K562 (cell line): ENCODE measurements at regions of chr12 and their contacts with region 1.

Region 1: GRCh38 chr12:64273527-64274403 is 51.7 kb upstream of the KICS2 start:
- DNase-seq: peak in 3 of 4 experiments; percentile 11 to 50 (median 40)
- ATAC-seq: peak; percentile 97
- H3K4me3 ChIP-seq: no peak overlapping the region
- H3K27ac ChIP-seq: no peak overlapping the region
- H3K4me1 ChIP-seq: no peaks in the 10 kb centered on the region
- H3K27me3 ChIP-seq: peaks cover 7 to 26% of the 10 kb centered on the region in 2 experiments; a peak in 4 of 5 replicates
- CTCF ChIP-seq: peak; percentile 71 to 84 (median 76)
- EP300 ChIP-seq: no peak
- POLR2A ChIP-seq: no peak
- RAD21 ChIP-seq: peak; percentile 70 to 77

Region 2: DNA sequence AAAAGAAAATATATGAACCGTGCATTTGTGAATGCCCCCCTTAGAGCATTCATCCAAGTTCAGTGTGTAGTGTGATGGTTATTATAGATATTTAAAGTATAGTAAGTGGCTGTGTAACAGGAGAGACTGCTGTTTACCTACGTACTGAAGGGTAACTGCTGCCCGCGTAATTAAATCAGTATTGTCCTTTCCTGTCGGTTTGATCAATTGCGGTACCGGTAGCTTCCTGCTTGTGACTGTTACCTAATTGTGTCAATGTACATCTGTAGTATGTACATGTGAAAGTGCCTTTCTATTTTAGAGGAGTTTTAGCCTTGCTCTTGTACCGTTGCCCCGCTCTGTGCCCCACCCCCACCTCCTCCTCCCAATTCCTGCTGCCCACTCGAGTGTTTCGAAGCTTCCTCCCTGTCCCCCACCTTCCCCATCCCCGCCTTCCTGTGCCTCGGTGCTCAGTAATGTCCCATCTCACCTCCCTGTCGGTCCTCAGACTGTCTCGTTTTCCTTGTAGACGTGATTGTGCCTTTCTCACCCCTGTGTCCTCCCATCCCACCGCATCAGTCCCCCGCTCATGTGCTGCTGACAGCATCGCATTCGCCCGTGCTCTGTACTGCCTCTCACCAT is 126.6 kb before region 1 on chr12:
- CTCF ChIA-PET with region 1: no interaction called
- POLR2A ChIA-PET with region 1: no interaction called
- in situ Hi-C with region 1: no loop called
- intact Hi-C with region 1: no loop called
- DNase-seq: no peak
- ATAC-seq: no peak
- H3K4me3 ChIP-seq: no peak overlapping the region
- H3K27ac ChIP-seq: no peak overlapping the region
- H3K4me1 ChIP-seq: no peaks in the 10 kb centered on the region
- H3K27me3 ChIP-seq: peaks cover 0 to 18% of the 10 kb centered on the region in 2 experiments; a peak in 2 of 5 replicates
- CTCF ChIP-seq: no peak
- EP300 ChIP-seq: no peak
- POLR2A ChIP-seq: no peak
- RAD21 ChIP-seq: no peak

Region 3: GRCh38 chr12:64318605-64319004 is 44.8 kb after region 1 on chr12:
- CTCF ChIA-PET with region 1: no interaction called
- POLR2A ChIA-PET with region 1: no interaction called
- in situ Hi-C with region 1: loop called (anchors 5 kb)
- intact Hi-C with region 1: loop called (anchors 5 kb)
- DNase-seq: peak in 1 of 4 experiments; percentile 7
- ATAC-seq: peak; percentile 53
- H3K4me3 ChIP-seq: no peak overlapping the region
- H3K27ac ChIP-seq: no peak overlapping the region
- H3K4me1 ChIP-seq: peaks cover 0 to 3% of the 10 kb centered on the region in 2 experiments; a peak in 1 of 5 replicates
- H3K27me3 ChIP-seq: peaks cover 0 to 4% of the 10 kb centered on the region in 2 experiments; a peak in 3 of 5 replicates
- CTCF ChIP-seq: no peak
- EP300 ChIP-seq: no peak
- POLR2A ChIP-seq: no peak
- RAD21 ChIP-seq: 0 out of 4 replicates have a peak, but pooled peaks of 1 of the 2 experiments have one; percentile 7

Region 4: GRCh38 chr12:64385468-64385867 is 111.7 kb after region 1 on chr12:
- CTCF ChIA-PET with region 1: interaction called, 4 read pairs
- POLR2A ChIA-PET with region 1: no interaction called
- in situ Hi-C with region 1: loop called (anchors 5 kb)
- intact Hi-C with region 1: no loop called
- DNase-seq: no peak
- ATAC-seq: no peak
- H3K4me3 ChIP-seq: no peak overlapping the region
- H3K27ac ChIP-seq: no peak overlapping the region
- H3K4me1 ChIP-seq: peaks cover 0 to 10% of the 10 kb centered on the region in 2 experiments; a peak in 2 of 5 replicates
- H3K27me3 ChIP-seq: peaks cover 0 to 8% of the 10 kb centered on the region in 2 experiments; a peak in 2 of 5 replicates
- CTCF ChIP-seq: no peak
- EP300 ChIP-seq: no peak
- POLR2A ChIP-seq: no peak
- RAD21 ChIP-seq: no peak

Region 5: GRCh38 chr12:64392221-64392620 is 118.5 kb after region 1 on chr12:
- CTCF ChIA-PET with region 1: interaction called, 4 read pairs
- POLR2A ChIA-PET with region 1: no interaction called
- in situ Hi-C with region 1: loop called (anchors 5 kb)
- intact Hi-C with region 1: loop called (anchors 1 kb)
- DNase-seq: peak in 3 of 4 experiments; percentile 35 to 40 (median 36)
- ATAC-seq: peak; percentile 70
- H3K4me3 ChIP-seq: no peak overlapping the region
- H3K27ac ChIP-seq: no peak overlapping the region
- H3K4me1 ChIP-seq: peaks cover 0 to 13% of the 10 kb centered on the region in 2 experiments; a peak in 2 of 5 replicates
- H3K27me3 ChIP-seq: peaks cover 0 to 11% of the 10 kb centered on the region in 2 experiments; a peak in 2 of 5 replicates
- CTCF ChIP-seq: peak in 2 of 3 experiments; percentile 17 to 46; a peak in 4 of 6 replicates
- EP300 ChIP-seq: no peak
- POLR2A ChIP-seq: no peak
- RAD21 ChIP-seq: peak in 1 of 2 experiments; percentile 23; a peak in 1 of 4 replicates